Ascending aorta (tissue), 2 donors: ENCODE measurements at regions of chr9 and their contacts with region 1.

Region 1: DNA sequence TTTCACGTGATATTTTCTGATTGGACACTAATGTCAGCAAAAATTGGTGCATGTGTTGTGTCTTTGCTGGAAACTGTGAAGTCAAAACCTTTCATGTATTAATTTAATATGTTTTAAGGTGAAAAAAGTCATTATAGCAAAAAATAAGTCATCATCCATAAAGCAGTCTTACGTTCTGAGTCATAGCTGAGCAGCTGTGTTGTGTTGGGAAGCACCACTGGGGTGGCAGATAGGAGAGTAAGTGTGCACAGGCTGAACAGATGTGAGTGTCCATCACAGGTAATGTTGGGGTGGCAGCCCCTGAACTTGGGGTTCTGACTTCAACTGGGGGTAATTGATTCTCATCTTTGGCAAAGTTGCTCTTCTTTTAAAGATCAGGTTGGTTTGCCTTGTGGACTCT is 156.8 kb downstream of the NXNL2 start:
- DNase-seq: no peak
- H3K4me3 ChIP-seq: no peak overlapping the region
- H3K27ac ChIP-seq: no peak overlapping the region
- H3K4me1 ChIP-seq: no peaks in the 10 kb centered on the region
- H3K27me3 ChIP-seq: no peaks in the 10 kb centered on the region
- CTCF ChIP-seq: no peak

Region 2: DNA sequence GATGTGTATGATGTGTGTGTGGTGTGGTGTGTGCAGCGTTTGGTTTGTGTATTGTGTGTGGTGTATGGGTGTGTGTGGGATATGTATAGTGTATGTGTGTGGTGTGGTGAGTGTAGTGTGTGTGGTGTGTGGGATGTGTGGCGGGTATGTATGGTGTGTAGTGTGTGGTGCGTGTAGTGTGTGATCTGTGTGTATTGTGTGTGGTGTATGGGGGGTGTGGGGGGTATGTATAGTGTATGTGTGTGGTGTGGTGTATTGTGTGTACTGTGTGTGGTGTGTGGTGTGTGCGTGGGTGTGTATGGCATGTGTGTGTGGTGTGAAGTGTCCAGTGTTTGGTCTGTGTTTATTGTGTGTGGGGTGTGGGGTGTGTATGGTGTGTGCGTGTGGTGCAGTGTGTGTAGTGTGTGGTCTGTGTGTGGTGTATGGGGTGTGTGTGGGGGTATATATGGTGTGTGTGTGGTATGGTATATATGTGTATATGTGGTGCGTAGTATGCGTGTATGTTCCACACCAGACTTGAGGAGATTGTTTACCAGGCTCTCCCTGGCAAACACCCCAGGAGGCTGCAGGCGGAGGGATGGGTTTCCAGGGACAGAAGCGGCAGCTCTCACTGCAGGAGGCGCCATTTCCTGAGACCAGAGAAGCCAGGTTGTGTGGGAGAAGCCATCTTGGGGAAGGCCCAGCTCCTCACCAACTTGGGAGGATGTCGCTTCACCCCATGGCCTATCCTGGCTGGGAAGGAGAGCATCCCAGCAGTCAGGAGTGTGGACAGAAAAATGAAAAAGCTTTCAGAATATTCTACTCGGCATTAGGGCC is 18.7 kb before region 1 on chr9:
- intact Hi-C with region 1: loop called (anchors 1 kb)
- DNase-seq: no peak
- H3K4me3 ChIP-seq: no peak overlapping the region
- H3K27ac ChIP-seq: no peak overlapping the region
- H3K4me1 ChIP-seq: no peaks in the 10 kb centered on the region
- H3K27me3 ChIP-seq: no peaks in the 10 kb centered on the region
- CTCF ChIP-seq: no peak

Region 3: GRCh38 chr9:88733651-88734421 is 42.0 kb after region 1 on chr9:
- intact Hi-C with region 1: no loop called
- DNase-seq: peak in 1 of 2 donors; percentile 75
- H3K4me3 ChIP-seq: no peak overlapping the region
- H3K27ac ChIP-seq: no peak overlapping the region
- H3K4me1 ChIP-seq: peaks cover 0 to 6% of the 10 kb centered on the region in 2 donors
- H3K27me3 ChIP-seq: no peaks in the 10 kb centered on the region
- CTCF ChIP-seq: no peak